ENCODE measurements at regions of chr2 and their contacts with region 1.

Region 1: DNA sequence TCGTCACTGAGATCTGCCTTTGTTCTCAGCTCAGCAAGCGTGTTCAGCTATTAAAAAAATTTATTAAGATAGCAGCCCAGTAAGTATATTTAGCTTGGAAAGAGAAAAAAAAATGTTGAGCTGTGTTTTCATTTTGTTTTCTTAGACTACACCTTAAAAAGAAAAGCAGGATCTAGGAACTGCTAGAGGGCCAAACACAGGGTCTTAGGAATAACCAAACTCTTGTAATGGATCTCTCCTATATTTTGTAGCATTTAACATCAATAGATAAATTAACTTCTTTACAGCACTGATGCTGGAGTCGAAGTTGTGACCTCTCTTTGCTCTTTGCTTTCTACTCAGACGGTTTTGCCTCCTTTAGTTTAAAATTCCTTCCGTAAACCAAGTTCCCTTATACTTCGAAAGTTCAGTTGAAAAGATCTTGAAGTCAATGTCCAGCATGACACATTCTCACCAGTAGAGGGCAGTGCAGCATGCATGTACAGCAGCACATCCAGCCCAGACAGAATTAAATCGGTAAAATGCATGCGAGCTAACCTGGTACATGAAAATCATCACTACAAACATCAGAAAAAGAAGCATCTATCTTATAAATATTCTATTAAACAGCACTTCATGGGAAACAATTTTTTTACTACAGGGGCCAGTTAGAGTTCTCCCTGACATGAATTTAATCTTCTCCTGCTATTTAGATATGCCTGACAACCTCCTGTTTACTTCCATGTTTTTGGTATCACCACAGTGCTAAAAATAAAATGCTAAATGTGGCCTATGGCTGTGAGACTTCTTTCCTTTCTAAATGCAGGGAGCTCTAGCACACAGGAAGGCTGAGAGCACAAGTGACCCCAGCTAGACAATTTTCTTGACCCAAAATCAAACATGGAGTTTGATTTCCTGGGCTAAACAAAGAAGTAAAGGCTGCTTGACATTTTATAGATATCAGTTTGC is 48.2 kb upstream of the MAP3K20 start:
- DNase-seq: peak; percentile 44 to 85
- H3K4me3 ChIP-seq: no peak overlapping the region
- H3K27ac ChIP-seq: no peak overlapping the region
- H3K4me1 ChIP-seq: peaks cover 0 to 3% (median 0%) of the 10 kb centered on the region in 4 experiments; a peak in 1 of 7 replicates
- H3K27me3 ChIP-seq: no peaks in the 10 kb centered on the region
- CTCF ChIP-seq: peak; percentile 57 to 96 (median 83)
- EP300 ChIP-seq: no peak
- POLR2A ChIP-seq: no peak
- RAD21 ChIP-seq: peak; percentile 95 to 96

Region 2: DNA sequence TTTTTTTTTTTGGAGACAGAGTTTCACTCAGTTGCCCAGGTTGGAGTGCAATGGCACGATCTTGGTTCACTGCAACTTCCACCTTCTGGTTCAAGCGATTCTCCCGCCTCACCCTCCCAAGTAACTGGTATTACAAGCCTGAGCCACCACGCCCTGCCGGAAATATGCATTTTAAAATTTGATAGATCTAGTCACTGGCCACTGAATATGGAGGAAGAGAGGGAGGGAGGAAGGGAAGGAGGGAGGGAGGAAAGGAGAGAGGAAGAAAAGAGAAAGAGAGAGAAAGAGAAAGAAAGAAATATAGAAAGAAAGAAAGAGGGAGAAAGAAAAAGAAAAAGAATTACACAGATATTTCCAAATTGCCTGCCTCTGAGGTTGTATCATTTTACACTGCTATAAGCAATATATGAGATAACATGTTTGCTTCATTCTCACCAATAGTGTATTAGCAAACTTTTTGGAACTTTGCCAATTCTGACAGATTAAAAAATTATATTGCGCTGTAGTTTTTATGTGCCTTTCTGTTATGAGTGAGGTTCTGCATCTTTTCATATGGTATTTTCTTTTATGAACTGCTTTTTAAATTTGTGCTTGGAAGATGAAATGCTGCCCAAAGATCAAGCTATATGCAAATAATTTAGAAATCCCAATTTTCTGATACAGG is 113.0 kb before region 1 on chr2:
- CTCF ChIA-PET with region 1: no interaction called
- POLR2A ChIA-PET with region 1: no interaction called
- DNase-seq: no peak
- H3K4me3 ChIP-seq: no peak overlapping the region
- H3K27ac ChIP-seq: no peak overlapping the region
- H3K4me1 ChIP-seq: no peaks in the 10 kb centered on the region
- H3K27me3 ChIP-seq: no peaks in the 10 kb centered on the region
- CTCF ChIP-seq: no peak
- EP300 ChIP-seq: no peak
- POLR2A ChIP-seq: no peak
- RAD21 ChIP-seq: no peak

Region 3: GRCh38 chr2:173043476-173043875 is 16.0 kb after region 1 on chr2:
- CTCF ChIA-PET with region 1: interaction called, 15 read pairs
- POLR2A ChIA-PET with region 1: no interaction called
- DNase-seq: no peak
- H3K4me3 ChIP-seq: no peak overlapping the region
- H3K27ac ChIP-seq: no peak overlapping the region
- H3K4me1 ChIP-seq: no peaks in the 10 kb centered on the region; a peak in 1 of 7 replicates
- H3K27me3 ChIP-seq: no peaks in the 10 kb centered on the region
- CTCF ChIP-seq: no peak
- EP300 ChIP-seq: no peak
- POLR2A ChIP-seq: no peak
- RAD21 ChIP-seq: no peak

Region 4: DNA sequence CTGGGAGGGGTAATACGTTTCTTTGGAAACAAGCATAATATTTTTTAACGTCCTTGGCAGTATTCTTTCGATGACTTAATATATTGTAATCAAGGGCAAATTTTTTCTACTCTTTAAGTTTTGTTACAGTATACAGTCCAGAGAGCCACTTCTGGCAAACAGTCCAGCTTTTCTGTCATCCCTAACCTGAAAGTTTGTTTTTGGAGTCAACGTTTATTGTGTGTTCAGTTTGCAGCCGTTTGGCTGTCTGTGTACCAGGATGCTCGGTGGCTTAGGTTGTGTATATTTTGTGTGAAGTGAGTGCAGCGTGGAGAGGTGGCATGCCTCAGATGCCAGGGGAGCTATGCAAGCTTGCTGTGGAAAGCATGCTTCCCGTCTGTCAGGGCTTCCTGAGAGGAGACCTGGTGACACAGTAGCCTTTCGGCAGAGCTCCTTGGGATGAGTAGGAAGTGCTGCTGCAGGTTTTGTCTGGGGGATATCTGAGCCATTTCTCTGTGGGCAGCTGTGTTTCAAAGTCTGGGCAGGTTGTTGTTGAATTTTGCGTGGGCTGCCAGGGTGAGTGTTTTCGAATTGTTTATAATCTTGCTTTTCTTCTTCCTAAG is 62.9 kb after region 1 on chr2:
- CTCF ChIA-PET with region 1: interaction called, 13 read pairs
- POLR2A ChIA-PET with region 1: no interaction called
- DNase-seq: no peak
- H3K4me3 ChIP-seq: no peak overlapping the region
- H3K27ac ChIP-seq: no peak overlapping the region
- H3K4me1 ChIP-seq: peaks cover 0 to 4% (median 0%) of the 10 kb centered on the region in 4 experiments; a peak in 1 of 7 replicates
- H3K27me3 ChIP-seq: no peaks in the 10 kb centered on the region
- CTCF ChIP-seq: no peak
- EP300 ChIP-seq: no peak
- POLR2A ChIP-seq: no peak
- RAD21 ChIP-seq: no peak

Region 5: GRCh38 chr2:173210270-173211196 is 183.1 kb after region 1 on chr2:
- CTCF ChIA-PET with region 1: interaction called, 227 read pairs
- POLR2A ChIA-PET with region 1: no interaction called
- DNase-seq: peak in 1 of 2 experiments; percentile 63
- H3K4me3 ChIP-seq: no peak overlapping the region
- H3K27ac ChIP-seq: no peak overlapping the region
- H3K4me1 ChIP-seq: no peaks in the 10 kb centered on the region
- H3K27me3 ChIP-seq: no peaks in the 10 kb centered on the region
- CTCF ChIP-seq: peak; percentile 60 to 84 (median 82)
- EP300 ChIP-seq: no peak
- POLR2A ChIP-seq: no peak
- RAD21 ChIP-seq: peak; percentile 90 to 95

Measured in H1 (cell line).